Activated naive CD4-positive, alpha-beta T cell treated with anti-CD3 and anti-CD28 coated beads for 36 hours (primary cell): ENCODE measurements at regions of chr15 and their contacts with region 1.

Region 1: GRCh38 chr15:31215490-31216214 is 111.0 kb upstream of the KLF13 start:
- DNase-seq: peak; percentile 86
- H3K4me3 Mint-ChIP-seq: peak overlapping the region; percentile 62
- H3K27ac Mint-ChIP-seq: peak overlapping the region; percentile 66
- H3K4me1 Mint-ChIP-seq: peaks cover 9% of the 10 kb centered on the region
- H3K27me3 Mint-ChIP-seq: no peaks in the 10 kb centered on the region

Region 2: GRCh38 chr15:31179693-31180092 is 36.0 kb before region 1 on chr15:
- CTCF ChIA-PET with region 1: no interaction called
- intact Hi-C with region 1: no loop called
- DNase-seq: no peak
- H3K4me3 Mint-ChIP-seq: no peak overlapping the region
- H3K27ac Mint-ChIP-seq: no peak overlapping the region
- H3K4me1 Mint-ChIP-seq: peaks cover 7% of the 10 kb centered on the region
- H3K27me3 Mint-ChIP-seq: no peaks in the 10 kb centered on the region

Region 3: DNA sequence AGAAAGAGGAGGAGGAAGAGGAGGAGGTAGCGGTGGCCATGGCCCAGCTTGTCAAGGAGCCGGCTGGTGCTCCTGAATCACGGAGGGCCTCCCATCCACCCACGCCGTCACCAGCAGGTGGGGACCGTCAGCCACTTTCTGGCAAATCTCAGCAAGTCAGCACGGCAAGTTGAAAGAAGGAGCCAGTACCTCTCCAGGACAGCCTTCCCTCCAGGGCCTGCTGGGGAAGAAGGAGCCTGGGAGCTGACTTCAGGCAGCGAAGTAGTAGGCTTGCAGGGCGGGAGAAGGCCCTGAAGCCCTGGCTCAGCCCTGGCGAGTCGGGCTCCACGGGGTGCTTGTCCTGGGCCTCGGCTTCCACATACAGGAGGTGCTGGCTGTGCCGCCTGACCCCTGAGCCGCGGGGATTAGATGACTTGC is 14.9 kb before region 1 on chr15:
- CTCF ChIA-PET with region 1: interaction called, 12 read pairs
- intact Hi-C with region 1: loop called (anchors 1 kb)
- DNase-seq: peak; percentile 88
- H3K4me3 Mint-ChIP-seq: no peak overlapping the region
- H3K27ac Mint-ChIP-seq: no peak overlapping the region
- H3K4me1 Mint-ChIP-seq: peaks cover 20% of the 10 kb centered on the region
- H3K27me3 Mint-ChIP-seq: no peaks in the 10 kb centered on the region

Region 4: GRCh38 chr15:31254431-31255175 is 39.0 kb after region 1 on chr15:
- CTCF ChIA-PET with region 1: no interaction called
- intact Hi-C with region 1: loop called (anchors 2 kb)
- DNase-seq: no peak
- H3K4me3 Mint-ChIP-seq: no peak overlapping the region
- H3K27ac Mint-ChIP-seq: no peak overlapping the region
- H3K4me1 Mint-ChIP-seq: peaks cover 24% of the 10 kb centered on the region
- H3K27me3 Mint-ChIP-seq: no peaks in the 10 kb centered on the region

Region 5: GRCh38 chr15:31265871-31266711 is 50.4 kb after region 1 on chr15:
- CTCF ChIA-PET with region 1: interaction called, 5 read pairs
- intact Hi-C with region 1: loop called (anchors 1 kb)
- DNase-seq: peak; percentile 81
- H3K4me3 Mint-ChIP-seq: no peak overlapping the region
- H3K27ac Mint-ChIP-seq: peak overlapping the region; percentile 67
- H3K4me1 Mint-ChIP-seq: peaks cover 84% of the 10 kb centered on the region
- H3K27me3 Mint-ChIP-seq: no peaks in the 10 kb centered on the region

Region 6: DNA sequence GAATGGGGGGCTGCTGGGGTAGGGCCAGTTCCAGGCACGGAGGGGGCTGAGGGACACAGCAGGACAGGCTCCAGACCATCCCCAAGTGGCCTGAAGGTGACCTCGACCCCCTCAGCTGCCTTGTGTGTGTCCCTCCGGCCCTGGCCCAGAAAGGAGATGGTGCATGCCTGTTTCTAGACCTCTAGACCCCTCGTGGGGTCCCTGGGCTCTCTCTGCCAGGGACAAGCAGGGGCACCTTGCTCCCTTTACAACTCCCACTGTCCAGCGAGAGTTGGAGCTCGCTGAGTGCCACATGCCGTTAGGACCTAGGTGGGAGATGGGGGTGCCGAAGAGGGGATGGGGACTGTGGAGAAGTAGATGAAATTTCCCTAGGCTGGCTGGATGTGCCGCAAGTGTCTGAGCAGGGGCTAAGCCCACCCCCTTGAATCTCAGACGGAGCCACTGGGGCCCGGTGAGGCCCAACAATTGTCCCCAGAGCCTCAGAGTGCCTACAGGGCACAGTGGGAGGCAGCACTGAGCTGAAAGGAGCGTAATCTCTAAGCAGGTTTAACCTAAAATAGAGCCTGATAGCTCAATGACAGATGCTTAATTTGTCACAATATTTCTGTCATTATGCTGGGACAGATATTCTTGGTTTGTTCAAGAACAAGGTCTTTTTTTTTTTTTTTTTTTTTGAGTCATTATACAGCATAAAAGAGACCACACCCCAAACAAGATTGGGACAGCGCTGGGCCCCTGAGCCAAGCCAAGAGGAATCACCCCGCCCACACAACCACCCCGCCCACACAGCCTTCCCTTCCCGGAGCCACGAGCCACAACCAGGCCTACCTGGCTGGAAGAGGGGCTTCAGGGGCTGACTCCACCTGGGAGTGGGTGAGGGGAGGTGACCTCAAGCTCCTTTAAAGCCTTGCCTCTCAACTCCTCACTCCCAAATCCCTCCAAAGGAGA is 87.4 kb after region 1 on chr15:
- CTCF ChIA-PET with region 1: no interaction called
- intact Hi-C with region 1: loop called (anchors 1 kb)
- DNase-seq: peak; percentile 46
- H3K4me3 Mint-ChIP-seq: no peak overlapping the region
- H3K27ac Mint-ChIP-seq: no peak overlapping the region
- H3K4me1 Mint-ChIP-seq: peaks cover 27% of the 10 kb centered on the region
- H3K27me3 Mint-ChIP-seq: no peaks in the 10 kb centered on the region

Region 7: DNA sequence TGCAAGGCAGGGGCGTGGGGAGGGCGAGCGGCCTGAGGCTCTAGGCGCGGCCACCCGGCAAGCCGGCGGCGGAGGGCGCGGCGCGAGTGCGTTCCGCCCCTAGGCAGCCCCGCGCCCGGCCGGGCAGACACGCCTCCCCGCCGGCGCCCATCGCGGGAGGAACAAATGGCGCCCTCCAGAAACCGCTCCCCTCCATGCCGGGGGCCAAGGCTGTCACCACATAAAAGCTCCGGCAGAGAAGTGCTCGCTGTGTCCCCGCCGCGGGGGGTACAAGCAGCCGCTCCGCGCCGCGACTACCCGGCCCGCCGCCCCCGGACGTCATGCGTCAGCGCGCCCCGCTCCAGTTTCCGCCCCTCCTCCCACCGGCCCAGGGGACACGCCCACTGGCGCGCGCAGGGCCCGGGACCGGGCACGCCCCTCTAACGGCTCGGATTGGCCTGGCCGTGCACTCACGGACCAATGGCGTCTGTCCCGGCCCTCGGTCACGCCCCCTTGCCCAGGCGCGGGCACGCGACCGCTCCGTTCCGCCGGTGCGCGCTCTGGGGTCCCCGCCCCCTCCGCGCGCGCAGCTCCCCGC is 110.6 kb after region 1 on chr15:
- CTCF ChIA-PET with region 1: interaction called, 5 read pairs
- intact Hi-C with region 1: loop called (anchors 2 kb)
- DNase-seq: peak; percentile 99
- H3K4me3 Mint-ChIP-seq: peak overlapping the region; percentile 87
- H3K27ac Mint-ChIP-seq: peak overlapping the region; percentile 78
- H3K4me1 Mint-ChIP-seq: peaks cover 33% of the 10 kb centered on the region
- H3K27me3 Mint-ChIP-seq: no peaks in the 10 kb centered on the region

Region 8: DNA sequence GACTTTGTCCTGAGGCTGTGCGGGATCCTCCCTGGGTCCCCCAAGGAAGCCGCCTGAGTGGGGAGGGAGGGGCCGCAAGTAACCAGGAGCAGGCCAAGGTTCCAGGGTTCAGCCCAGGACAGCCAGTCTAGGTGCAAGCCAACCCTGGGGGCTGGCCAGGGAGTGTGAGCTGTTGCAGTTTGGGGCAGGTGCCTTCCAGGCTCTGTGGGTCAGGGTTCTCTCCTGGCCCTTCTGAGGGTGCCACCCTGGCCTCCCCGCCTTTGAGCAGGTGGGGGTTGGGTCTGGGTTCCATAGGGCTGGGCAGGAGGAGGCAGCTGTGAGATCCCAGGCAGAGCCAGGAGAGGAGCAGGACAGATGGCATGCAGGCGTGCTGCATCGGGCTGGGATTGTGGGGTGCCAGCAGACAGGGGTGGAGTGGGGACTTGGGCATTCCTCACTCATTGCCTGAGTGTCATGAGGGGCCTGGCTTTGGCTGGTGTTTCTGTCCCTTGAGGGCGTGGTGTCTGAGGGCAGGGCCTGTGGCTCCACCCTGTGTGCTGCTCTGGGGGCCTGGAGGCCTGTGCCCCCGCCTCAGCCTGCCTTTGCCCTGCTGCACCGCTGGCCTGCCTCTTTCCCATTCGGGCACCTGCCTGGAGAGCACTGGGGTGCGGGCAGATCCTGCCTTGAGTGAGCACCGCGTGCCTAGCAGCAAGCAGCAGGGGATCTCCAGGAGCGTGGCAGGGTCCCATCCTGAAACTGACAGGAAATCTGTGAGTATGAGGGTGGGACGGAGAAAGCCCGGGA is 129.4 kb after region 1 on chr15:
- CTCF ChIA-PET with region 1: interaction called, 3 read pairs
- intact Hi-C with region 1: loop called (anchors 2 kb)
- DNase-seq: peak; percentile 66
- H3K4me3 Mint-ChIP-seq: peak overlapping the region; percentile 92
- H3K27ac Mint-ChIP-seq: peak overlapping the region; percentile 99
- H3K4me1 Mint-ChIP-seq: peaks cover 98% of the 10 kb centered on the region
- H3K27me3 Mint-ChIP-seq: no peaks in the 10 kb centered on the region